ENCODE measurements at regions of chr2 and their contacts with region 1.

Region 1: DNA sequence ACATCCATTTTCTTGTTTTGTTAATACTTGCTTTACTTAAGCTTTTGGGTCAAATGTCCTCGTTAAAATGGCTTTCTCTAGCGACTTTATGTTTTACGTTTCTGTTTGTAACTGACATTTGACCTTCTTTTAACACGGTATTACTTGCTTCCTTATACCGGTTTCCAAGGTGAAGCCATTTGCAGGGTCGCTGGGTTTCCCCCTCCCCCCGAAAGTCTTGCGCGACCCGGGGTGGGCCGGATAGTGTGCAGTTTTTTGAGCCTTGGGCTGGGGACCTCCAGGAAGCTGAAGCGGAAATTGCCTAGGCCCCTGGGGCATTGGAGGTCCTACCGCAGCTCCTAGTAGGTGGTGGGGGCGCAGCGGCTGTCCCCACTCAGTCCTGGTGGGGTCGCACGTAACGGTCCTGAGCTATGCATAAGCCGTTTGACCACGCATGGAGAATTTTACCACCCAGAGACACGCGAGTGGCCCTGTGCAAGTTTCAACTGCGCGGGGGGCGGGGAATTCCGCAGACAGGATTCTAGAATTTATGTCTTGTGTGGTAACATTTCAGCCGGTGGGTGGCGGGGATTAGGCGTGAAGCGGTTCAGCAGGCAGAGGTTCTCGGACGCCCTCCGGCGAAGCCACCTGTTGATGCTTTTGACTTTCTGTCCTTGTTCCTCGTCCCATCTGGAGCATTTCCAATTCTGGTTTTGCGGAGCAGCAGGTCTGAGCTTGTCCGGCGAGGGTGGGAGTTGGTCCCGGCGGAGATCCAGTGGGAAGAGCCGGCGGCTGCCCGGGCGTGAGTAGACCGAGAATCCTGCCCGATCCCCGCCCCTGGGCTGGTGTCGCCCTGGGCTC is 2.4 kb downstream of the CFLAR start:
- DNase-seq: peak; percentile 77 to 94 (median 89)
- ATAC-seq: peak; percentile 43
- H3K4me3 ChIP-seq: peak overlapping the region; percentile 82 to 95
- H3K4me3 Mint-ChIP-seq: peak overlapping the region; percentile 99
- H3K27ac ChIP-seq: peak overlapping the region; percentile 92
- H3K27ac Mint-ChIP-seq: peak overlapping the region; percentile 100
- H3K4me1 ChIP-seq: peaks cover 47% of the 10 kb centered on the region
- H3K4me1 Mint-ChIP-seq: peaks cover 67% of the 10 kb centered on the region
- H3K27me3 ChIP-seq: no peaks in the 10 kb centered on the region
- H3K27me3 Mint-ChIP-seq: no peaks in the 10 kb centered on the region
- CTCF ChIP-seq: peak; percentile 64

Region 2: DNA sequence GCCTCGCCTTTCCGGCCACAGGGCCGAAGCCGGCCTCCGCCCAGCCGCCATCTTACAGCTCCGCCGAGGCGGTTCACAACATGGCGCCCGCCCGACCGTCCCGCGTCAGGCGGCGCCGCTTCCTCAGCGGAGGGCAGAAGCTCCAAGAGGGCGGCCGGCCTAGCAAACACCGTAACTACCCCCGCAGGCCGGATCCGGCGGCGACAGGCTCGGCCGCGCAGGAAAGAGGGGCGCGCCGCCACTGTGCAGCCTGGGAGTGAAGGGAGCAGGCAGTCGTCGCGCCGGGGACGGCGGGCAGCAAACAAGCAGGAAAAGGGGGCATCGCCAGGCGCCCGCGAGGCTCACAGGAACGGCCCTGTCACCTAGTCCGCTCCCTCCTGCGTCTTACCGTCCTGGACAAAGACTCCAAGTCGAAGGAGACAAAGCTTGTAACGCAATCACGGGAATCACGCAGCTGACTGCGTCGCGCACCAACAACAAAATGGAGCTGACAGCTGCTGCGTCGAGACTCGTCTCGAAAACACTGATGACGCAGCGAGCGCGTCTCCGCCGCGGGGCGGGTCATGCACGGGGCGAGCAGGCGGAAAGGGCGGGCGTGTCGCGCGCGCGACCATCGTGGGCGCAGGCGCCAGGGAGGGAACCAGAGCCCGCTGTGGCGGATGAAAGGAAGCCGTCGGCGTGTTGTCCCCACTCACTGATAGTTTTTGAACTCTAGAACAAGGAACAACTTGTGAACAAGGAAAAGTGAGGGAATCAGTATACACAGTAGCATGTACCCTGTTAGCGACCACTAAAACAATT is 254.0 kb before region 1 on chr2 and contains the start of gene CLK1:
- CTCF ChIA-PET with region 1: interaction called, 8 read pairs
- POLR2A ChIA-PET with region 1: interaction called, 56 read pairs
- intact Hi-C with region 1: loop called in 1 of 2 experiments (anchors 2 kb)
- DNase-seq: peak; percentile 94 to 99 (median 98)
- ATAC-seq: peak; percentile 78
- H3K4me3 ChIP-seq: peak within 1 kb of the TSS; percentile 84 to 98
- H3K4me3 Mint-ChIP-seq: peak within 1 kb of the TSS; percentile 96
- H3K27ac ChIP-seq: peak within 1 kb of the TSS; percentile 98 to 100
- H3K27ac Mint-ChIP-seq: peak within 1 kb of the TSS; percentile 100
- H3K4me1 ChIP-seq: peaks cover 29% of the 10 kb centered on the region
- H3K4me1 Mint-ChIP-seq: peaks cover 43% of the 10 kb centered on the region
- H3K27me3 ChIP-seq: no peaks in the 10 kb centered on the region
- H3K27me3 Mint-ChIP-seq: no peaks in the 10 kb centered on the region
- CTCF ChIP-seq: no peak
- total RNA-seq, gene CLK1: 1,353 to 1,404 TPM

Region 3: DNA sequence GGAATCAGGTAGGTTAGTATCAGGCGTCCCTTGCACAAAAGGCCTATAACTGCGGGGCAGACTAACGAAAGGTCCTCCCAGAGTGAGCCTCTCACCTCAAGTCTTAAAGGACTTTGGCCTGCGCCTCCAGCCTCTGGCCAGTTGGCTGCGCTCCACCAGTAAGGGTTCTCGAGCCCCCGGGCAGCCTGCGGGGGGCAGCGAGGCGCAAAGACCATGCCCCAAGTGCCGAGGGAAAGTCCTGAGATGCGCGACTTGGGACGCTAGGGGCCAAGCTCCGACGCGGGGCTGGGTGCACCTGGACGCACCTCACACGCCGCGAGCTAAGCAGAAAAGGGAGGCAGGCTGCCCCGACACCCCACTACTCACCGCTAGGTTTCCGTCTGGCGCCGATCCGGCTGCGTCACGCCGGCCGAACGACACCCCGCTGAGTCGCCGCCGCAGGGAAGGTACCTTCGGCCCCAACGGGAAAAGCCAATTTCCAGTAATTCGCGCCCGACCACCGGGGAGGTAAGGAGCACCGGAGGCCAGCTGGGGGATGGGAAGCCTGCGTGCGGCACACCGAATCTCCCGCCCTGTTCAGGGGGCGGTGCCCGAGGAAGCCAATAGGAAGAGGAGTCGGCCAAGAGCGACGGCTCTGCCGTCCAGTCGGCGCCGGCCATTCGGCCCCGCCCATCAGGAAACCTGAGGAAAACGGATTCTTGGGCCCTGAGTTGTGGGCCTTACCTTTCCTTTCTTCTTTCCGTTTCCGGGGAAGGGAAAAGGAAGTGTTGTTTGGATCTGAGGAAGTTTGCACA is 155.0 kb before region 1 on chr2 and contains the start of gene ORC2:
- CTCF ChIA-PET with region 1: interaction called, 3 read pairs
- POLR2A ChIA-PET with region 1: interaction called, 10 read pairs
- intact Hi-C with region 1: loop called in 1 of 2 experiments (anchors 1 kb)
- DNase-seq: peak; percentile 84 to 96 (median 93)
- ATAC-seq: peak; percentile 94
- H3K4me3 ChIP-seq: peak within 1 kb of the TSS; percentile 70 to 90
- H3K4me3 Mint-ChIP-seq: peak within 1 kb of the TSS; percentile 99
- H3K27ac ChIP-seq: peak within 1 kb of the TSS; percentile 76 to 90
- H3K27ac Mint-ChIP-seq: peak within 1 kb of the TSS; percentile 99
- H3K4me1 ChIP-seq: peaks cover 30% of the 10 kb centered on the region
- H3K4me1 Mint-ChIP-seq: peaks cover 57% of the 10 kb centered on the region
- H3K27me3 ChIP-seq: no peaks in the 10 kb centered on the region
- H3K27me3 Mint-ChIP-seq: no peaks in the 10 kb centered on the region
- CTCF ChIP-seq: peak; percentile 51
- total RNA-seq, gene ORC2: 17.7 to 21.3 TPM

Region 4: DNA sequence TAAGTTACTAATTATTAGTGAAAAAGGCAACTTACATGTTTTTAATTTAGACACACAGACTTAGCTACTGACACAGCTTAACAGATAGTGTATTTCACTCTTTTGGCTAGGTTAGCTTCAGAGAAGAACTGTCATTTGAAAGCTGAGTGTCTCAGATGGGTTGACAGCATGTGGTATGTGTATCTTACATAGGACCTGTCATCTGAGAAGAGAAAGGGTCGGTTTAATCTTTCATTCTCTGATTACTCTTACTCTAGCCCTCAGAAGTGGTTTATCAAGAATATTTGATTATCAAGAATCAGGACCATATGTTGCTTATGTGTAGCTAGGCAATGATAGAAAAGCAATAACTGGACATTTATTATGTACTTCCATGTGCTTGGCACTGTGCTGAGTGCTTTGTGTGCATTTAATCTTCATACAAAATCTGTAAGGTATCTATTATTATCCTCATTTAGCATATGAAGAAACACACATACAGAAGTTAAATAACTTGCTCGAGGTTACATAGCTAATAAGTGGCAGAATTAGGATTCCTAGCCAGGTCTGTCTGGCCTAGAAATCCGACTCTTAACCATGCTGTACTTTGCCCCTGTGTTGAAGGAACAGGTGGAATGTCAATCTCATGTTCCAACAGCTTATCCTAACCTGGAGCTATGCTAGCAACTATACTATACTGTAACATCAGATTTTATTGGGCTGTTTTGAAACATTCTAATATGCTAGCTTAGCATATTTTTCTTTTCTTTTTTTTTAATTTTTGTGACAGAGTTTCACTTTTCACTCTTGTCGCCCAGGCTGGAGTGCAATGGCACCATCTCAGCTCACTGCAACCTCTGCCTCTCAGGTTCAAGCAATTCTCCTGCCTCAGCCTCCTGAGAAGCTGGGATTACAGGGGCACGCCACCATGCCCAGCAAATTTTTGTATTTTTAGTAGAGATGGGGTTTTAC is 26.0 kb after region 1 on chr2:
- CTCF ChIA-PET with region 1: interaction called, 13 read pairs
- POLR2A ChIA-PET with region 1: interaction called, 20 read pairs
- intact Hi-C with region 1: no loop called
- DNase-seq: no peak
- ATAC-seq: no peak
- H3K4me3 ChIP-seq: no peak overlapping the region
- H3K4me3 Mint-ChIP-seq: no peak overlapping the region
- H3K27ac ChIP-seq: no peak overlapping the region
- H3K27ac Mint-ChIP-seq: no peak overlapping the region
- H3K4me1 ChIP-seq: no peaks in the 10 kb centered on the region
- H3K4me1 Mint-ChIP-seq: peaks cover 4% of the 10 kb centered on the region
- H3K27me3 ChIP-seq: no peaks in the 10 kb centered on the region
- H3K27me3 Mint-ChIP-seq: no peaks in the 10 kb centered on the region
- CTCF ChIP-seq: no peak

Region 5: DNA sequence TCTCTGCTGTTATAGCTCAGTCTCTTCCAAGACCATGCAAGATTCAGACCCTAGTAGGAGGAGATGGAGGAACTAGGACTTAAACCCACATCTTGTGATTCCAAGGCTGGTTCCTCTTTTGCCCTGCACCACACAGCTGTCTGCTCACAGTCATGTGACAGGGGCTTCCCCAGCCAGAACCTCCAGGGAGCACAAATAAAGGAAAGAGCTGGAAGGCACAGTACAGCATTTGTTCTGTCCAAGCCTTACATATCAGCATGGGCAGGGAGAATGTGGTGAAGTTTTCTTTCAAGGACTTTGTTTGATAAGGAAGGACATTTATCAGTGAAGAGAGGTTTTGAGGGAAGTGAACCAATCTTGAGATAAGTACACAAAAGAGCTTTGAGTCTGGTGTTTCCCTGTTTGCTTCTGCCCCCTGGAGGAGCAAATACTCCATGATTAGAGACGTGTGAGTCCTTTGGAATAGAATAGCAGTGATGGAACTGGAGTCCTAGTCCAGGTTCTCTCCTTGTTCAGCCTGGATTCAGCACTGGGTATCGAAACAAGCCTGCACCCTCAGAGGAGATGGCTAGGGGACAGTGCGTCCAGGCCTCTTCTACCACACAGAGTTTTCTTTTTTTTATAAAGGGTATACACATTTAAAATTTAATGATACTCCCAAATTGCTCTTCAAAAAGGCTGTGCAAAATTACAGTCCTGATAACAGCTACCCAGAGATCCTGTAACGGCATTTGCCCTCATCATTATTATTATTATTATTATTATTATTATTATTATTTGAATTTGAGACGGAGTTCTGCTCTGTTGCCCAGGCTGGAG is 40.0 kb after region 1 on chr2:
- CTCF ChIA-PET with region 1: interaction called, 66 read pairs
- POLR2A ChIA-PET with region 1: interaction called, 34 read pairs
- intact Hi-C with region 1: loop called (anchors 1 kb)
- DNase-seq: peak; percentile 21 to 83 (median 65)
- ATAC-seq: peak; percentile 93
- H3K4me3 ChIP-seq: no peak overlapping the region
- H3K4me3 Mint-ChIP-seq: no peak overlapping the region
- H3K27ac ChIP-seq: peak overlapping the region in 1 of 2 experiments; percentile 68
- H3K27ac Mint-ChIP-seq: peak overlapping the region; percentile 83
- H3K4me1 ChIP-seq: peaks cover 11% of the 10 kb centered on the region
- H3K4me1 Mint-ChIP-seq: peaks cover 18% of the 10 kb centered on the region
- H3K27me3 ChIP-seq: no peaks in the 10 kb centered on the region
- H3K27me3 Mint-ChIP-seq: no peaks in the 10 kb centered on the region
- CTCF ChIP-seq: peak; percentile 54

Region 6: GRCh38 chr2:201182650-201183364 is 64.5 kb after region 1 on chr2 and contains the start of gene CASP10:
- CTCF ChIA-PET with region 1: interaction called, 10 read pairs
- POLR2A ChIA-PET with region 1: interaction called, 13 read pairs
- intact Hi-C with region 1: loop called in 1 of 2 experiments (anchors 5 kb)
- DNase-seq: peak in 5 of 9 experiments; percentile 17 to 89 (median 23)
- ATAC-seq: peak; percentile 87
- H3K4me3 ChIP-seq: peak within 1 kb of the TSS; percentile 57 to 60
- H3K4me3 Mint-ChIP-seq: peak within 1 kb of the TSS; percentile 94
- H3K27ac ChIP-seq: peak within 1 kb of the TSS; percentile 58 to 78
- H3K27ac Mint-ChIP-seq: peak within 1 kb of the TSS; percentile 95
- H3K4me1 ChIP-seq: peaks cover 25% of the 10 kb centered on the region
- H3K4me1 Mint-ChIP-seq: peaks cover 45% of the 10 kb centered on the region
- H3K27me3 ChIP-seq: no peaks in the 10 kb centered on the region
- H3K27me3 Mint-ChIP-seq: no peaks in the 10 kb centered on the region
- CTCF ChIP-seq: peak; percentile 48
- total RNA-seq, gene CASP10: 9.8 to 10.4 TPM

Region 7: DNA sequence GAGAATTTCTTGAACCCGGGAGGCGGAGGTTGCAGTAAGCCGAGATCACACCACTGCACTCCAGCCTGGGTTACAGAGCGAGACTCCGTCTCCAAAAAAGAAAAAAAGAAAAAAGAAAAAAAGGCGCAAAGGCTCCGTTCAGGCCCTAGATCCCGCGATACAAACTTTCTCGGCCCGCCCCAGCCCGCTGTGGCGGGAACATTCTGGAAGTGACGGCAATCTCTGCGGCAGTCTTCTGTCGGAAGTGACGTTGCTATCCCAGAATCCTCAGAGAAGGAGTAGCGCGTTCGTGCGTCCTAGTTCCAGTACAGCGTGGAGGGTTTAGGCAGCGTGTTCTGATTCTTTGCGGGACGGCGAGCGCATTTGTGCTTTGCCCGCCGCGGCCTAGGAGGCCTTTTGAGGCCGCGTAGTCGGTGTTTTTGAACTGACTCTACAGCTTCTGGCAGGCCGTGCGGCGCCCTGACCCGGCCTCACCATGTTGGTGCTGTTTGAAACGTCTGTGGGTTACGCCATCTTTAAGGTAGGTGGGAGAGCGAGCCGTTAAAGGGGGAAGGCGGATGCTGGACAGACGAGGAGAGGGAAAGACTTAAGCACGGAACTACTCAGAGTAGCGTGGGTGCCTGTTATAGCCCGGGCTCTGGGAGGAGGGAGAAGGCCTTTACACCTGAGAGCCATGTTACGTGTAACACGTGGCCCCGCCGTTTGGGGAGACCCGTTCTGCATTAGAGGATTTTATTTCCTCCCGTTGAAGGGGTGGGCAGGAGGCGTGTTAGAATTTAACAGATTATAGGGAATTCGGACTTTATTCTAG is 1147.3 kb after region 1 on chr2 and contains the start of gene NOP58:
- CTCF ChIA-PET with region 1: no interaction called
- POLR2A ChIA-PET with region 1: no interaction called
- intact Hi-C with region 1: loop called in 1 of 2 experiments (anchors 5 kb)
- DNase-seq: peak; percentile 80 to 97 (median 87)
- ATAC-seq: peak; percentile 75
- H3K4me3 ChIP-seq: peak within 1 kb of the TSS; percentile 80 to 100
- H3K4me3 Mint-ChIP-seq: peak within 1 kb of the TSS; percentile 52
- H3K27ac ChIP-seq: peak within 1 kb of the TSS; percentile 97 to 98
- H3K27ac Mint-ChIP-seq: peak within 1 kb of the TSS; percentile 43
- H3K4me1 ChIP-seq: peaks cover 18% of the 10 kb centered on the region
- H3K4me1 Mint-ChIP-seq: peaks cover 21% of the 10 kb centered on the region
- H3K27me3 ChIP-seq: no peaks in the 10 kb centered on the region
- H3K27me3 Mint-ChIP-seq: no peaks in the 10 kb centered on the region
- CTCF ChIP-seq: no peak
- total RNA-seq, gene NOP58: 345 to 352 TPM